Heart right ventricle (tissue), 16 donors: ENCODE measurements at regions of chr16 and their contacts with region 1.

Region 1: DNA sequence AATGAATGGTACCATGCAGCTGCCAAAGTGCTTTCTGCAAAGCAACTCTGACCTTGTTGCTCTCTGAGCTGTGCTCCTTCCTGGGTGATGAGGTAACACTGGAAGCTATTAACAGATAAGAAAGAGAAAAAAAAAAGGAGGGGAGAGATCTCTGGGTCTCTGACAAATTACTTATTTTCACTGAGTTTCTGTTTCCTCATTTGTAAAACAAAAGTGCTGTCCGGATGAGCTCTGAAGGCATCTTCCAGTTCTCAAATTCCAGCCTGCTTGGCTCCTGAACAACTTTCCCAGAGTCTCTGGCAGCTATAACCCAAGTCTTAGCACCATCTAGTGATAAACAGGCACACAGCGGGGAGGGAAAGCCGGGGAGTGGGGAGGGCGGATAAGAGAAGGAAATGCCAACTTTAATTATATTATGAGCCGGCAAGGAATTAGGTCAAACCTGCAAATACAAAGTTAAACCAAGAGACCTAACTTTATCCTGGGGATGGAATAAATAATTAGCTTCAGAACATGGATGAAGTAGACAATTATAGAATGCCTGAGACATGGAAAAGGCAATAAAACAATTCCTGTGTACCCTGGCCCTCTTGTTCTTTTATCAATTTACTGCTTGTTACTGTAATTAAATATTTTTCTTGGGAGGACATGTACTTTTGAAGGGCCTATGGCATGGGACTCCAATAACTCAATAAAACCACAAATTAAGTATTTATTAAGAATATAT is 61.3 kb upstream of the KIFC3 start:
- DNase-seq: peak; percentile 41 to 75
- ATAC-seq: peak; percentile 81 to 94 (median 92)
- H3K4me3 ChIP-seq: no peak overlapping the region
- H3K27ac ChIP-seq: peak overlapping the region in 3 of 10 donors; percentile 19 to 44 (median 31)
- H3K4me1 ChIP-seq: peaks cover 0 to 26% (median 8%) of the 10 kb centered on the region in 9 donors
- H3K27me3 ChIP-seq: no peaks in the 10 kb centered on the region
- CTCF ChIP-seq: peak; percentile 41 to 89 (median 62)

Region 2: DNA sequence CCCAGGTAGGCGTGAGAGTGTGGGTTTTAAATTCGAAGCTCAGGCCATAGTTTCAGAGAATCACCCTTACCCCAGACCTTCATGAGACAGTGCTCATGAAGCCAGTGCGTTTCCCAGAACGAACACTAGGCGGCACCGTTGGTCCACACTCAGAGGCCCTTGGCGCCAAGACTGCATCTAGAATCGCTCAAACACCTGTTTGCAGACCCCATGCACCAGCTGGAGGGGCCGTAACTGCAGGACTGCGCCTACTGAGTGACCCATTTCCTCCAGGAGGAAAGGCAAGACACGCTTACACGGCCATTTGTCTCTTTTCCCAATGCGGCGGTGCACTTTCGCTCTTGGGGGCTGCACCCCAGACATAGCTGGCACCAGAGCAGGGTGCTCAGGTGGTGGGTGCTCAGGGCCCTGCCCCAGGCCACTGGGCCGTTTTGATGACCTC is 287.1 kb before region 1 on chr16:
- intact Hi-C with region 1: loop called in 4 of 10 experiments (anchors 10 kb)
- DNase-seq: peak; percentile 66 to 77
- ATAC-seq: peak in 7 of 8 donors; percentile 44 to 85 (median 79)
- H3K4me3 ChIP-seq: no peak overlapping the region
- H3K27ac ChIP-seq: no peak overlapping the region
- H3K4me1 ChIP-seq: peaks cover 0 to 10% (median 0%) of the 10 kb centered on the region in 9 donors
- H3K27me3 ChIP-seq: peaks cover 0 to 34% (median 10%) of the 10 kb centered on the region in 7 donors
- CTCF ChIP-seq: peak; percentile 87 to 98 (median 94)

Region 3: DNA sequence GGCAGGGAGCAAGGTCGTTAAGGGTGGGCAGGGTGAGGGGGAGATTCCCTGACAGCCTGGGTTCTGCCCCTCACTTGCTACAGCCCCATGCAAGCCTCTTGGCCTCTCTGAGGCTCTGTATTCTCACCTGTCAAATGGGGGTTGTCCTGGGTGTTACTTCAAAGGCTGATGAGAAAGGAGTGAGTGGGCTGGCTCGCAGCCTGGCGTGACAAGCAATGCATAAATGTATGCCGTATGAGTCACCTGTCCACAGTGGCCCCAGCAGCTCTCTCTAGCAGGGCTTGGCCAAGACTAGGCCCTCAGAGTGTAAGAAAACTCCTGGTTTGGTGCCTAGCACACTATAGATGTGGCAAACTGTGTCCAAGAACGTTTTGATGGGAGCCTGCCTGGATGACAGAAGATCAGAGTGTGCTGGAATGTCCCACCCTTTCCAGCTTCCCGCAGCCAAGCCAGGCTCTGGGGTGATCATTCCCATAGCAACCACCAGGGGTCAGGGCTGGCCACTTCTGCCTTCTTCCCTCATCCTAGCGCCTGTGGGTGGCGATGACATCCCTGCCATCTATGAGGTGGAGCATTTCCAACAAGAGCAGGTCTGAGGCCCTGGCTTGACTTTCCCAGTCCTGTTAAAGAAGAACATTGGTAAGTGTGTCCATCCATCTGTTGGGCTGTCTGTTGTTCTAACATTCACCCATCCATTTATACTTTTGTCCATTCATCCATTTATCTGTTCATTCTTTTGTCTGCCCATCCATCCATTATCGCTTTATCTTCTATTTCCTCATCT is 272.3 kb before region 1 on chr16:
- intact Hi-C with region 1: loop called in 3 of 10 experiments (anchors 5 to 10 kb)
- DNase-seq: peak; percentile 65 to 74
- ATAC-seq: peak; percentile 86 to 95 (median 92)
- H3K4me3 ChIP-seq: no peak overlapping the region
- H3K27ac ChIP-seq: peak overlapping the region in 1 of 10 donors; percentile 53
- H3K4me1 ChIP-seq: peaks cover 0 to 33% (median 4%) of the 10 kb centered on the region in 9 donors
- H3K27me3 ChIP-seq: peaks cover 0 to 4% (median 0%) of the 10 kb centered on the region in 7 donors
- CTCF ChIP-seq: peak; percentile 80 to 95 (median 91)

Region 4: DNA sequence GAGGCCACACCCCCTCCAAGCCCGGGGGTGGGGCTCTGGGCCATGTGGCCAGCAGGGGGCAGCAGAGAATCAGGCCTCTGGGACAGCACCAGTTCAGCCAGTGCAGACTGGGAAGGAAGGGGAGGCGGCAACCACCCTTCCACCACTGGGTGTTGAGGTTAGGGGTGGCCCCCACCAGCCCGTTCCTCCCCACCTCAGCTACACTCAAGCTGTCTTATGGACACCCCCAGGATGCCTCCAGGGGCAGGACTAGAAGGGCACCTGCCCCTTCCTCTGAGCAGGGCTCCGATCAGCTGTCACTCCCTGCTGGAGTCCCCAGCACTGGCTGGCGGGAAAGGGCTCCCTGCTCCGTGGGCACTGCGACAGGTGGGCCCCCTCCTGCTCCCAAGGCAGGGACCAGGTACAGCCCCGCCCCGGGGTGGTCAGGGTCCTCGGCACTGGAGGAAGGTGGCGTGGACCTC is 106.2 kb before region 1 on chr16:
- intact Hi-C with region 1: loop called (anchors 1 to 5 kb)
- DNase-seq: peak; percentile 90 to 93
- ATAC-seq: peak; percentile 81 to 93 (median 90)
- H3K4me3 ChIP-seq: no peak overlapping the region
- H3K27ac ChIP-seq: peak overlapping the region in 8 of 10 donors; percentile 54 to 80 (median 67)
- H3K4me1 ChIP-seq: peaks cover 0 to 35% (median 17%) of the 10 kb centered on the region in 9 donors
- H3K27me3 ChIP-seq: no peaks in the 10 kb centered on the region
- CTCF ChIP-seq: peak; percentile 96 to 100 (median 99)

Region 5: DNA sequence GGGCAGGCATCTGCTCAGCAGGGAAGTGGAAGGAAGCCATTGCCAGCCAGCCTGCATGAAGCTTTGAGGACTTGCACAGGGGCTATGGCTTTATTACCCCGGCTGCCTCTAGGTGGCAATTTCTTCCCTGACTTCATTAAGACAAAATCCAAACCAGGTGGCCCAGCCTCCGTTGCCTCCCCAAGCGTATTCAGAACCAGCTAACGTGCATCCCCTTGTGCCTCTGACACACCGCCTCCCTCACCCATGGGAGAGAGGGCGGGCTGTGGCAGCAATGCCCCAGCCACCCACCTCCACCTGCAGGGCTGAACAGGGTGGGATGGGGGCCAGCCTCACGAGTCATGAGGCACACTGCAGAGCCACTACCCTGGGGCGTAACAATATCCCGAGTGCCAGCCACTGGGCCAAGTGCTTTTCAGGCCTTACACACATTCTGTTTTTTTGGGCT is 68.1 kb before region 1 on chr16:
- intact Hi-C with region 1: loop called (anchors 1 to 10 kb)
- DNase-seq: peak; percentile 32 to 50
- ATAC-seq: peak in 5 of 8 donors; percentile 2 to 34 (median 27)
- H3K4me3 ChIP-seq: no peak overlapping the region
- H3K27ac ChIP-seq: peak overlapping the region in 5 of 10 donors; percentile 6 to 52 (median 28)
- H3K4me1 ChIP-seq: peaks cover 19 to 76% (median 72%) of the 10 kb centered on the region in 9 donors
- H3K27me3 ChIP-seq: peaks cover 0 to 8% (median 0%) of the 10 kb centered on the region in 7 donors
- CTCF ChIP-seq: peak in 7 of 9 donors; percentile 33 to 53 (median 48)

Region 6: DNA sequence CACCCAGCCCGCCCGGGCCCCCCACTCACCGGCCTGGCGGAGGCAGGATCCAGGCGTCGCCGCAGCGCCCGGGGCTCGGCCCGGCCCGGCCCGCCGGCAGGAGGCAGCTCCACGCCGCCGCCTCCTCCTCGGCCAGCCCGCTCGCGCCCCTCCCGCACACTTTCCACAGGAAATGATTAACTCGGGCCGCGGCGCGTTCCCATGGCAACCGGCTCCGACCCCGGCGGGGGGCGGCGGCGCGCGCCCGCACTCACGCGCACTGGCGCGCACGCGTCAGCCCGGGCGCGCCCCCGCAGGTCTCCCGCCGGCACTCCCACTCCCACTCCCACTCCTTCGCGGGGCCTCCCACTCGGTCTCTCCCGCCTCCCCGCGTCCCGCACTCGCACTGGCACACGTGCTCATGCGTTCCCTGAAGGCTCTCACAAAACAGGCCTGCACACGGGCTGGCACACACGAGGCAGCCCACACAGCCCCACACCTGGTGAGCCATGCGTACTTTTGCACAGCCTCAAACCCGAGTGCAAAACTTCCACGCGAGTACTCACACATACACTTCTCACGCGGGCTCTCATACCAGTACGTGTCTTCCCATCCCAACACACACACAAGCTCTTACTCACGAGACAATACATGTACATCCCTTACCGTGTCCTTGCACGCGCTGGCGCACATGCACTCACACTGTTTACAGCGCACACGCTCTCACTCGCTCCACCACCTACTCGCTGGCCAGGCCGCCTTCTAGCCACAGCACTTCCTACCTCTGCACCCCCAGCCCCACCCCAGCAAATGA is 61.1 kb before region 1 on chr16 and contains the start of gene KIFC3:
- intact Hi-C with region 1: loop called (anchors 1 to 10 kb)
- DNase-seq: peak; percentile 90 to 91
- ATAC-seq: peak; percentile 9 to 76 (median 34)
- H3K4me3 ChIP-seq: peak within 1 kb of the TSS; percentile 51 to 85 (median 66)
- H3K27ac ChIP-seq: peak within 1 kb of the TSS; percentile 89 to 99 (median 96)
- H3K4me1 ChIP-seq: peaks cover 34 to 81% (median 68%) of the 10 kb centered on the region in 9 donors
- H3K27me3 ChIP-seq: peaks cover 0 to 12% (median 0%) of the 10 kb centered on the region in 7 donors
- CTCF ChIP-seq: peak in 5 of 9 donors; percentile 34 to 60 (median 44)
- total RNA-seq, gene KIFC3: 42.5 to 91.4 (median 63.5) TPM

Region 7: DNA sequence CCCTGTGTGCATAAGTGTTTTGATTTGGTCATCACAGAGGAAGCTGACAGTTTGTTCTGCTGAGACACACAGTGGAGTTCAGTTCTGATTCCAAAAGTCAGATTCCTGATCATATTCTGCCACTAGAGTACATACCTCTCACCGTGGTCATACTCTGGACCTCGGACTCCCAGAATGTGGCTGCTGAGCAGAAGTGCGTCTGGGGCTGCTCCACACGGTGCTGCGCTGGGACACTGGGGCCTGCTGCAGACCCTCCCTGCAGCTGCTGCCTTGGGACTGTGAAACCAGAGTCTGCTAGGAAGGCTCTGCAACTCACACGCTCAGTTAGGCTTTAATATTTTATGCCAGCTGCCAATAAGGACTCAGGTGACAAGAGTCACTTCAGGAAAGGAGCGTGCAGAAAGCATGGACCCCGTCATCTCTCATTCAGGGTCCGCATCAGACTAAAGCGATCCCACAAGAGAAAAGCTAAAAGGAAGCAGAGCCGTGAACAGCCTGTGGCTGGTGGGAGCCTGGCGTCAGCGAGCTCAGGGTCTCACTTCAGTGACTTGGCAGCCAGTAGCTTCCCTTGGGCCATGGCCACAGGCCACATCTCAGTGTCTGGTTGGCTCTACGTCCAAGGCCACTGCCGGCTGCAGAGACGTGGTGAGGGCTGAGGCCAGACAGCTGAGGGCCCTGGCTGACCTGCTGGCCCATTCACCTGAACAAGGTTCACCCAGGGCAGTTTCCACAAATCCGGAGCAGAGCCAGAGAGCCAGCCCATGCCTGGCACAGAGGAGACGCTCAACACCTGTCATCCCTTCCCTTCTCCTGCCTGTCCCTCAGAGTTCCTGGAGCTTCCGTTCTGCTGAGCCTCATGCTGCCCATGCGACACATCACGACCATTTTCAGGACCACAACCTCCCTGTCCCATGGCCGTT is 36.6 kb before region 1 on chr16:
- intact Hi-C with region 1: loop called in 1 of 10 experiments (anchors 2 kb)
- DNase-seq: peak in 1 of 2 donors; percentile 54
- ATAC-seq: peak in 7 of 8 donors; percentile 18 to 68 (median 59)
- H3K4me3 ChIP-seq: no peak overlapping the region
- H3K27ac ChIP-seq: peak overlapping the region in 7 of 10 donors; percentile 38 to 63 (median 48)
- H3K4me1 ChIP-seq: peaks cover 0 to 31% (median 6%) of the 10 kb centered on the region in 9 donors
- H3K27me3 ChIP-seq: no peaks in the 10 kb centered on the region
- CTCF ChIP-seq: no peak

Region 8: GRCh38 chr16:57846078-57846697 is 17.4 kb before region 1 on chr16:
- intact Hi-C with region 1: no loop called
- DNase-seq: no peak
- ATAC-seq: peak in 2 of 8 donors; percentile 33 to 55
- H3K4me3 ChIP-seq: no peak overlapping the region
- H3K27ac ChIP-seq: no peak overlapping the region
- H3K4me1 ChIP-seq: no peaks in the 10 kb centered on the region
- H3K27me3 ChIP-seq: no peaks in the 10 kb centered on the region
- CTCF ChIP-seq: no peak

Region 9: GRCh38 chr16:59121411-59122261 is 1258.0 kb after region 1 on chr16:
- intact Hi-C with region 1: no loop called
- DNase-seq: no peak
- ATAC-seq: no peak
- H3K4me3 ChIP-seq: no peak overlapping the region
- H3K27ac ChIP-seq: no peak overlapping the region
- H3K4me1 ChIP-seq: peaks cover 0 to 5% (median 0%) of the 10 kb centered on the region in 9 donors
- H3K27me3 ChIP-seq: no peaks in the 10 kb centered on the region
- CTCF ChIP-seq: no peak